ENCODE measurements at regions of chr1 and their contacts with region 1.

Region 1: GRCh38 chr1:10430216-10431069 is at the start of gene CENPS:
- DNase-seq: peak; percentile 97
- H3K4me3 Mint-ChIP-seq: peak within 1 kb of the TSS; percentile 95
- H3K27ac Mint-ChIP-seq: peak within 1 kb of the TSS; percentile 98
- H3K4me1 Mint-ChIP-seq: peaks cover 18% of the 10 kb centered on the region
- H3K27me3 Mint-ChIP-seq: no peaks in the 10 kb centered on the region
- total RNA-seq, gene CENPS: 18.8 and 25.1 TPM in 2 replicates

Region 2: GRCh38 chr1:9942939-9943788 is 487.3 kb before region 1 on chr1 and contains the starts of genes LZIC and NMNAT1:
- intact Hi-C with region 1: loop called (anchors 2 kb)
- DNase-seq: peak; percentile 98
- H3K4me3 Mint-ChIP-seq: peak within 1 kb of the TSS; percentile 95
- H3K27ac Mint-ChIP-seq: peak within 1 kb of the TSS; percentile 95
- H3K4me1 Mint-ChIP-seq: peaks cover 11% of the 10 kb centered on the region
- H3K27me3 Mint-ChIP-seq: no peaks in the 10 kb centered on the region
- total RNA-seq, gene LZIC: 35.1 and 35.9 TPM in 2 replicates
- total RNA-seq, gene NMNAT1: 5.7 and 6.0 TPM in 2 replicates

Region 3: DNA sequence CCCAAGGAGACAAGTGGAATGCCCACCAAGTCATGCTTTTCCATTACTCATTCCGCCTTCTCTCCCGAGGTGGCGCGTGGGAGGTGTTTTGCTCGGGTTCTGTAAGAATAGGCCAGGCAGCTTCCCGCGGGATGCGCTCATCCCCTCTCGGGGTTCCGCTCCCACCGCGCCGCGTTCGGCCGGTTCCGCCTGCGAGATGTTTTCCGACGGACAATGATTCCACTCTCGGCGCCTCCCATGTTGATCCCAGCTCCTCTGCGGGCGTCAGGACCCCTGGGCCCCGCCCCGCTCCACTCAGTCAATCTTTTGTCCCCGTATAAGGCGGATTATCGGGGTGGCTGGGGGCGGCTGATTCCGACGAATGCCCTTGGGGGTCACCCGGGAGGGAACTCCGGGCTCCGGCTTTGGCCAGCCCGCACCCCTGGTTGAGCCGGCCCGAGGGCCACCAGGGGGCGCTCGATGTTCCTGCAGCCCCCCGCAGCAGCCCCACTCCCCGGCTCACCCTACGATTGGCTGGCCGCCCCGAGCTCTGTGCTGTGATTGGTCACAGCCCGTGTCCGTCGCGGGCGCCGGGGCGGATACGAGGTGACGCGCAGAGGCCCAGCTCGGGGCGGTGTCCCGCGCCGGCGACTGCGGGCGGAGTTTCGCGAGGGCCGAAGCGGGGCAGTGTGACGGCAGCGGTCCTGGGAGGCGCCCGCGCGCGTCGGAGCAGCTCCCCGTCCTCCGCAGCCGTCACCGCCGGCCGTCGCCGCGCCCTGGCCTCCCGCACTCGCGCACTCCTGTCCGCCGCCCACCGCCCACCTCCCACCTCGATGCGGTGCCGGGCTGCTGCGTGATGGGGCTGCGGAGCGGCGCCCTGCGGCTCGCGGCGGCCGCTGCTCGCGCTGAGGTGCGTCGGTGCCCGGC is 220.3 kb before region 1 on chr1 and contains the start of gene KIF1B:
- intact Hi-C with region 1: loop called (anchors 1 kb)
- DNase-seq: peak; percentile 99
- H3K4me3 Mint-ChIP-seq: peak within 1 kb of the TSS; percentile 94
- H3K27ac Mint-ChIP-seq: peak within 1 kb of the TSS; percentile 86
- H3K4me1 Mint-ChIP-seq: peaks cover 26% of the 10 kb centered on the region
- H3K27me3 Mint-ChIP-seq: peaks cover 5% of the 10 kb centered on the region
- total RNA-seq, gene KIF1B: 17.8 and 19.3 TPM in 2 replicates

Region 4: GRCh38 chr1:10398734-10399623 is 31.5 kb before region 1 on chr1 and contains the start of gene PGD:
- intact Hi-C with region 1: loop called (anchors 1 kb)
- DNase-seq: peak; percentile 99
- H3K4me3 Mint-ChIP-seq: peak within 1 kb of the TSS; percentile 93
- H3K27ac Mint-ChIP-seq: peak within 1 kb of the TSS; percentile 84
- H3K4me1 Mint-ChIP-seq: peaks cover 22% of the 10 kb centered on the region
- H3K27me3 Mint-ChIP-seq: no peaks in the 10 kb centered on the region
- total RNA-seq, gene PGD: 142 and 144 TPM in 2 replicates

Region 5: GRCh38 chr1:10494754-10495474 is 64.5 kb after region 1 on chr1:
- intact Hi-C with region 1: loop called (anchors 1 kb)
- DNase-seq: peak; percentile 95
- H3K4me3 Mint-ChIP-seq: peak overlapping the region; percentile 85
- H3K27ac Mint-ChIP-seq: peak overlapping the region; percentile 91
- H3K4me1 Mint-ChIP-seq: peaks cover 48% of the 10 kb centered on the region
- H3K27me3 Mint-ChIP-seq: no peaks in the 10 kb centered on the region